Transverse colon (tissue), 4 donors: ENCODE measurements at regions of chr7 and their contacts with region 1.

Region 1: GRCh38 chr7:105387621-105388372 is 924 bp downstream of the SRPK2 start:
- DNase-seq: peak; percentile 63
- H3K4me3 ChIP-seq: peak overlapping the region; percentile 89 to 99 (median 94)
- H3K27ac ChIP-seq: peak overlapping the region; percentile 74 to 90 (median 86)
- H3K4me1 ChIP-seq: peaks cover 0 to 9% (median 7%) of the 10 kb centered on the region in 4 donors
- H3K27me3 ChIP-seq: no peaks in the 10 kb centered on the region
- CTCF ChIP-seq: no peak
- EP300 ChIP-seq: no peak
- POLR2A ChIP-seq: no peak

Region 2: DNA sequence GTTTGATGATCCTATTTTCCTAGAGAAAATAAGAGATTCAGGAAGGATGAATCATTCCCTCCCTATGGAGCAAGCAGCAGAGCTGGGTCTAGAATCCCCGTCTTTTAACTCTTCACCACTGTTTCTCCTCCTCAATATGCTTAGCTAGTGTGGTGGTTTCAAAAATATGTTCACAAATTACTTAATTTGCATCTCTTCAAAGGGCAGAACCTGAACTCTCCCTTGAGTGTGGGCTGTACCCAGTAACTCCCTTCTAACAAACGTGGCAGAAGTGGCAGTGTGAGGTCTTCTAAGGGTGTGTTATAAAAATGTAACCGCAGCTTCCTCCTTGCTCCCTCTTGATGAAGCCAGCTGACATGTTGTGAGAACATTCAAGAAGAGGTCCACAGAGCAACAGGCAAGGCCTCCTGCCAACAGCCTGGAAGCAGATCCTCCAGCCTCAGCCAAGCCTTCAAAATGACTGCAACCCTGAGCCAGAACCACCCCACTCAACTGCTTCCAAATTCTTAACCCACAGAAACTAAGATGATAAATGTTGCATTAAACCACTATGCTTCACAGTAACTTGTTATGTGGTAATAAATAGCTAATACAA is 35.7 kb before region 1 on chr7:
- in situ Hi-C with region 1: no loop called
- intact Hi-C with region 1: no loop called
- DNase-seq: peak; percentile 54
- H3K4me3 ChIP-seq: no peak overlapping the region
- H3K27ac ChIP-seq: peak overlapping the region; percentile 46 to 79 (median 68)
- H3K4me1 ChIP-seq: peaks cover 24 to 43% (median 31%) of the 10 kb centered on the region in 4 donors
- H3K27me3 ChIP-seq: no peaks in the 10 kb centered on the region
- CTCF ChIP-seq: no peak
- EP300 ChIP-seq: no peak
- POLR2A ChIP-seq: no peak

Region 3: GRCh38 chr7:105448181-105448580 is 60.4 kb after region 1 on chr7:
- in situ Hi-C with region 1: loop called in 1 of 4 experiments (anchors 10 kb)
- intact Hi-C with region 1: no loop called
- DNase-seq: no peak
- H3K4me3 ChIP-seq: no peak overlapping the region
- H3K27ac ChIP-seq: peak overlapping the region in 1 of 4 donors; percentile 26
- H3K4me1 ChIP-seq: no peaks in the 10 kb centered on the region
- H3K27me3 ChIP-seq: no peaks in the 10 kb centered on the region
- CTCF ChIP-seq: no peak
- EP300 ChIP-seq: no peak
- POLR2A ChIP-seq: no peak